ENCODE measurements at regions of chr13 and their contacts with region 1.

Region 1: DNA sequence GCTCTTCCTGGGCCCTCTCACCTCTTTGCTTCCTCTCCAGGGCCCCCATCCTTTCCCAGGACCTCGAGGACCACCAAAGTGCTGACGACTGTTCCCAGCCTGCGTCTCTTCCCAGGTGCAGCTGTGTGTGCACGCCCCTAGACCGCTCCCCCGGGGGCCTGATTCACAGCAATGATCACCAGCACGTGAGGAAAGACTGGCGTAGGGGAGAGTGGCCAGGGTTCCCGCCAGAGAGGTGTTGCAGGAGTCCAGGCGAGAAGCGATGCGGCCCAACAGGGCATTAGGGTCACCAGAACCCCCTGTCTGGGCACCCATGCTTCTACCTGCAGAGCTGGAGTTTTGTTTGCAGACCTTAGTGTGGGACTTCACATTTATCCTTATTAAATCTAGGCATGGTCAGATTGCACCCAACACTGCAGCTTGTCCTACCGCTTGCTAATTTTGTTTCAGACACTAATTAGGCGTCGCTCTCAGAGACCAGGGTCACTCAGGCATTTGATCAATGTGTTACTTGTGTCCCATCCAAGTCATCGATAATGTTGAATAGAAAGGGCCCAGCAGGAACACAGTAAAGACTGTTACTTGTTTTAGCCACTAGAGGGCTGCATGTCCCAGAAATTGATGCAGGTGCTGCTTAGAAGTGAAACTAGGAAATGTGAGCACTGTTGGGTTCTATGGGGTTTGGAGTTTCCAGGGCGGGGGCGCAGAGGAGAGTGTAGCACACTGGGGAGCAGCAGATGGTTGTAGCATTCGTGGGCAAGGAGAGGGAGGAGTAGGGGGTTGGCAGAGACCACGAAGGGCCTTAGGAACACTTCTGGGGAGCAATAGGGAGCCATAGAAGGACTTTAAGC is 53.2 kb downstream of the CDADC1 start:
- DNase-seq: peak; percentile 90
- H3K4me3 ChIP-seq: peak overlapping the region; percentile 39
- H3K27ac ChIP-seq: no peak overlapping the region
- H3K4me1 ChIP-seq: peaks cover 44% of the 10 kb centered on the region
- CTCF ChIP-seq: peak; percentile 98

Region 2: GRCh38 chr13:49374585-49375290 is 73.8 kb after region 1 on chr13:
- CTCF ChIA-PET with region 1: no interaction called
- POLR2A ChIA-PET with region 1: interaction called, 5 read pairs
- intact Hi-C with region 1: loop called (anchors 2 kb)
- DNase-seq: peak; percentile 23
- H3K4me3 ChIP-seq: peak overlapping the region; percentile 45
- H3K27ac ChIP-seq: peak overlapping the region; percentile 98
- H3K4me1 ChIP-seq: peaks cover 71% of the 10 kb centered on the region
- CTCF ChIP-seq: no peak

Region 3: GRCh38 chr13:49400755-49401659 is 100.0 kb after region 1 on chr13:
- CTCF ChIA-PET with region 1: no interaction called
- POLR2A ChIA-PET with region 1: interaction called, 4 read pairs
- intact Hi-C with region 1: loop called (anchors 1 kb)
- DNase-seq: peak; percentile 87
- H3K4me3 ChIP-seq: peak overlapping the region; percentile 75
- H3K27ac ChIP-seq: peak overlapping the region; percentile 86
- H3K4me1 ChIP-seq: peaks cover 35% of the 10 kb centered on the region
- CTCF ChIP-seq: no peak

Region 4: DNA sequence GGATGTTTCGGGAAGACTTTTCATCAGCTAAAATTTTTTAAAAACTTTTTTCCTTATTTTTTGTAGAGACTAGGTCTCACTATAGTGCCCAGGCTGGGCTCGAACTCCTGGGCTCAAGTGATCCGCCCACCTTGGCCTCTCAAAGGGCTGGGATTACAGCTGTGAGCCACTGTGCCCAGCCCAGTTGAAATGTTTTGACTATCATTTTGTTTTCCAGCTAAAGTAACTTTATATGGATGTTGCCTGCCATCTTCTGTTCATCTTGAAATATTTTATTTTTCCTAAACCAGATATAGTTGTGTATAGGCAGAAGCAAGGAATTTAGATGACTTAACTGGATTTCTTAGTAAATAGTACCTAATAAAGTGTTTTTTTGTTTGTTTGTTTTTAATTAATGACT is 135.9 kb after region 1 on chr13:
- CTCF ChIA-PET with region 1: no interaction called
- POLR2A ChIA-PET with region 1: interaction called, 3 read pairs
- intact Hi-C with region 1: loop called (anchors 2 kb)
- DNase-seq: peak; percentile 40
- H3K4me3 ChIP-seq: no peak overlapping the region
- H3K27ac ChIP-seq: no peak overlapping the region
- H3K4me1 ChIP-seq: peaks cover 22% of the 10 kb centered on the region
- CTCF ChIP-seq: peak; percentile 49

Region 5: DNA sequence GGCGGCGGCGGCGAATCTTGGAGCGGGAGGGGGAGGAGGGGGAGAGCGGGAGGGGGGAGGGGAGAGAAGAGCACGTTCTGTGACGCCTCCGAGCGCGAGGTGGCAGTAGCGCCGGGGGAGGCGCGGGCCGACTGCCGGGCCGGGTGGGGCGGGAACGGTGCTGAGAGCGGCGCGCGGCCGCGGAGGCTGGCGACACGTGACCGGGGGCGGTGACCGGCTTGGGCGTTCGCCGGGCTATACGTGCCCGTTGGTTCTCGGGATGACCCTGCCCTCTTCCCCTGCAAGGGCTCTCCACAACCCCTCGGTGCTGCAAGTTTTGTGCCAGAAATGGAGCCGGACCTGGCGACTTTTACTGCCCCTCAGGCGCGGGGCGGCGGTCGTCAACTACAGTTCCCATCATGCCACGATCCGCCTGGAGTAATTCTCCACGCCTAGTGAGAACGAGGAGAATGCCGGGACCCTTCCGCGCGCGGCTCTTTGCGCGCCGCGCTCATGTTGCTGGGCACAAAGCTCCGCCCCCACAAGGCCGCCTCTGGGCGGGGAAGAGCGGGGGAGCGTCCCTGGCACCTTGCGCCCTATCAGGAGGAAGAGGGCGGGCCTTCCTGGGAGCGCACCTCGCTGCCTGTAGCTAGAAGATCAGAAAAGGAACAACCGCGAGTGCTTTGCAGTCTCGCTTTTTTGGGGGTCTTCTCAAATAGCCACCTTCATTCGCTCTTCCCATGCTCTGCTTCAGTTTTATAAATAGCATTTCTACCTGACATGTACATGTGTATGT is 491.8 kb after region 1 on chr13 and contains the start of gene KPNA3:
- CTCF ChIA-PET with region 1: no interaction called
- POLR2A ChIA-PET with region 1: no interaction called
- intact Hi-C with region 1: loop called (anchors 5 kb)
- DNase-seq: peak; percentile 98
- H3K4me3 ChIP-seq: peak within 1 kb of the TSS; percentile 75
- H3K27ac ChIP-seq: peak within 1 kb of the TSS; percentile 90
- H3K4me1 ChIP-seq: peaks cover 24% of the 10 kb centered on the region
- CTCF ChIP-seq: no peak; the same call in 1 of the 2 replicates
- total RNA-seq, gene KPNA3: 17.2 and 18.2 TPM in 2 replicates

Measured in OCI-LY7 (cell line).